ENCODE measurements at regions of chr17 and their contacts with region 1.

Region 1: DNA sequence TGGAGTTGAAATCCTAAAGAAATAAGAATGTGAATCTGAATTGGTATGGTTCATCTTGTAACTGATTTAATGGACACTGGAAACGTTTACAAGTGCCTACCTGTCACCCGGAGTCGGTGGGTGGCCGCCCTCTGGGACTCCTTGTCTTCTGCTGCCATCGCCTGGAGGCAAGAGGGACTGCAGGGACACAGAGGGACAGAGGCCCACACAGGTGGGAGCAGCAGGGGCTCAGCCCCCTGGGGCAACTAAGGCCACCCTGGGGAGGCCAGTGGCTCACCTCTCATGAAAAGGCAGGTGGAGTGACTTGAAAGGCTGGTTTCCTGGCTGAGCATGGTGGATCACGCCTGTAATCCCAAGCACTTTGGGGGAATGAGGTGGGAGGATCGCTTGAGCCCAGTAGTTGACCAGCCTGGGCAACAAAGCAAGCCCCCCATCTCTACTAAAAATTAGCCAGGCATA is 23.2 kb downstream of the TMEM92 start:
- DNase-seq: peak; percentile 59 to 86 (median 80)
- ATAC-seq: peak; percentile 100
- H3K4me3 ChIP-seq: no peak overlapping the region
- H3K4me3 Mint-ChIP-seq: no peak overlapping the region
- H3K27ac ChIP-seq: no peak overlapping the region
- H3K27ac Mint-ChIP-seq: no peak overlapping the region
- H3K4me1 ChIP-seq: no peaks in the 10 kb centered on the region
- H3K4me1 Mint-ChIP-seq: no peaks in the 10 kb centered on the region
- H3K27me3 ChIP-seq: no peaks in the 10 kb centered on the region
- H3K27me3 Mint-ChIP-seq: peaks cover 3% of the 10 kb centered on the region
- CTCF ChIP-seq: peak; percentile 87

Region 2: DNA sequence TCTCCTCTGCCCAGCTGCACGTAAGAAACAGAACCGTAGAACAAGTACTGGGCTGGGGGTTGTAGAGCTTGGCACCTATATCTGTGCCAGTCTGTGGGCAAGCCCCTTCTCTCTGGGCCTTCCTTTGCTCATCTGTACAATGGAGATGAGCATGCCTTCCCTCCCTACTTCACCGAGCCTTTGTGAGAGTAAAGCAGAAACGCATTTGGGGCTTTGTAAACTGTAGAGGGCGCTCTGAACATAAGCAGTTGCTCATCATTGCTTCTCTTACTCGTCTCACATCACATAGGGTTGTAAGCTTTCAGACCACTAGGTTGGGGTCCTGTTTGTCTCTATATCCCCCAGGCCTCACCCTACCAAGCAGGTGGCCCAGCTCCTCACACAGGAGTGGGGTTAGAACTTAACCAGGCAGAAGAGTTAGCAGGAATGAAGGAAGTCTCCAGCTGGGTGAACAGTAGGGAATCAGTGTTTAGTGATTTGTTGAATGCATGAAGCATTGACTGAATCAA is 182.5 kb before region 1 on chr17:
- CTCF ChIA-PET with region 1: no interaction called
- POLR2A ChIA-PET with region 1: no interaction called
- intact Hi-C with region 1: loop called in 1 of 2 experiments (anchors 5 kb)
- DNase-seq: peak in 5 of 9 experiments; percentile 30 to 69 (median 45)
- ATAC-seq: peak; percentile 56
- H3K4me3 ChIP-seq: no peak overlapping the region
- H3K4me3 Mint-ChIP-seq: no peak overlapping the region
- H3K27ac ChIP-seq: no peak overlapping the region
- H3K27ac Mint-ChIP-seq: no peak overlapping the region
- H3K4me1 ChIP-seq: peaks cover 14% of the 10 kb centered on the region
- H3K4me1 Mint-ChIP-seq: peaks cover 13% of the 10 kb centered on the region
- H3K27me3 ChIP-seq: peaks cover 11 to 17% of the 10 kb centered on the region in 2 experiments
- H3K27me3 Mint-ChIP-seq: peaks cover 36% of the 10 kb centered on the region
- CTCF ChIP-seq: peak; percentile 56

Region 3: DNA sequence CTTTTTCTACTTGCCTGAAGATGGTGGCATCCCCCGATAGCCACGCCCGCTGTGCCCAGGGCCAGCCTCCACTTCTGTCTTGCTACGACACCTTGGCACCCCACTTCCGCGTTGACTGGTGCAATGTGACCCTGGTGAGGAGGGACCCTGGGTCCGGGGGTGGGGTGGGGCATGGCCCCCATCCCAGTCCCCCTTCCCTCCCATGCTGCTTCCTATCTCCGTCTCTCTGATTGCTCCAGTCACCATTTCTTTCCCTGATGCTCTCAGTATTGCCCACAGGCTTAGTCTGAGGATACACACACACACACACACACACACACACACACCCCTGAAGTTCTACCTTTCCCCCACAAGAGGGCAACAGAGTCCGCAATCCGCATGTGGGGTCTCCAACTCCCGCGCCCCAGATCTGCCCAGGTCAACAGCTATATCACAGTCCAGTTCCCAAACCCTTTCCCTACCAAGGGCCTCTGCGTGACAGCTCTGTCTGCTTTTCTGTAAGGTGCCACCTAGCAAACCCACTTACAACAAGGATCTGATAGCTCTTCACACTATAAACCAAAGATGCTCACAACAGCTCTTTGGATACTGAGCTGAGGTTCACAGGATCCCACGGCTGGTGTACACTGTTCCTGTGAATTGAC is 128.2 kb before region 1 on chr17:
- CTCF ChIA-PET with region 1: interaction called, 10 read pairs
- POLR2A ChIA-PET with region 1: no interaction called
- intact Hi-C with region 1: loop called (anchors 1 kb)
- DNase-seq: peak; percentile 37 to 83 (median 70)
- ATAC-seq: peak; percentile 86
- H3K4me3 ChIP-seq: peak overlapping the region; percentile 28 to 32
- H3K4me3 Mint-ChIP-seq: peak overlapping the region; percentile 75
- H3K27ac ChIP-seq: peak overlapping the region; percentile 17 to 28
- H3K27ac Mint-ChIP-seq: peak overlapping the region; percentile 90
- H3K4me1 ChIP-seq: peaks cover 20% of the 10 kb centered on the region
- H3K4me1 Mint-ChIP-seq: peaks cover 10% of the 10 kb centered on the region
- H3K27me3 ChIP-seq: no peaks in the 10 kb centered on the region
- H3K27me3 Mint-ChIP-seq: peaks cover 3% of the 10 kb centered on the region
- CTCF ChIP-seq: peak; percentile 55

Region 4: DNA sequence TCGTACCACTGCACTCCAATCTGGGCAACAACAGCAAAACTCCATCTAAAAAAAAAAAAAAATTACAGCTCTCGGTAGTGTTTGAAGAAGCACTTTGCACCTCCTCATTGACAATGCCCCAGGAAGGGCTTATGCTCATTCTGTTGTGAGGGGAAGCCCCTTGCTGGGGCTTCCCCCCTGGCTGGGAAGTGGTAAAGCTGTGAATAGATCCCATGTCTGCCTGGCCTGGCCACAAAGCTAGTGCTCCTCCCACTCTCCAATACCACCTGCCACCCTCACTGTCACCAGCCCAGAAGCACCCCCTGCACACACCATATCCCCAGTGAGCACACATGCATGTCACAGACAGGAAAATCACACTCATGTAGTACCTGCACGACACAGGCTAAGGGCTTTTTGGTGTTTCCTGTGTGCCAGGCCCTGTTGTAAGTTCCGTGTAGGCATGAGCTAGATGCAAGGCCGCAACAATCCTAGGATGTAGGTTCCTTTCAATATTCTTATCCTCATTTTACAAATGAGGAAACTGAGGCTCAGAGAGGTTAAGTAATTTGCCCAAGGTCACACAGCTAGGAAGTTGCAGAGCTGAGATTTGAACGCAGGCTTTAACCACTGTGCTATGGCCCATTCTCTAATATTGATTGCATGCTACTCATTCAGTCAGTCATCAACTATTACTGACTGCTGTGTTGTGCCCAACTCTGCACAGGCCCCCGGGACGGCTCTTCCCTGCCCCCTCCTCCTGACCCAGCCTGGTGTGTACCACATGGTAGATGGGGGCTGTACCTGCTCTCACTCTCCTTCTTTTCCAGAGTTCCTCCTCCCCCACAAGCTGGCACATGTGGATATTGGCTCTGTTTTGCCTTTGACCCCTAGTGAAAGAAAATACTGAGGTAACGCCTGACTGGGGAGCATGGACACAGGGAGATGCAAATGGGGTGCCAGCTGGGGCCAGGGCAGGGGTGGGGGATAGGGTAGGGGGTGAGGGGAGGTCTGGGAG is 84.1 kb before region 1 on chr17:
- CTCF ChIA-PET with region 1: interaction called, 16 read pairs
- POLR2A ChIA-PET with region 1: interaction called, 4 read pairs
- intact Hi-C with region 1: no loop called
- DNase-seq: peak in 8 of 9 experiments; percentile 4 to 82 (median 50)
- ATAC-seq: peak; percentile 97
- H3K4me3 ChIP-seq: no peak overlapping the region
- H3K4me3 Mint-ChIP-seq: no peak overlapping the region
- H3K27ac ChIP-seq: no peak overlapping the region
- H3K27ac Mint-ChIP-seq: no peak overlapping the region
- H3K4me1 ChIP-seq: peaks cover 9% of the 10 kb centered on the region
- H3K4me1 Mint-ChIP-seq: peaks cover 7% of the 10 kb centered on the region
- H3K27me3 ChIP-seq: peaks cover 0 to 2% of the 10 kb centered on the region in 2 experiments
- H3K27me3 Mint-ChIP-seq: peaks cover 15% of the 10 kb centered on the region
- CTCF ChIP-seq: no peak

Region 5: DNA sequence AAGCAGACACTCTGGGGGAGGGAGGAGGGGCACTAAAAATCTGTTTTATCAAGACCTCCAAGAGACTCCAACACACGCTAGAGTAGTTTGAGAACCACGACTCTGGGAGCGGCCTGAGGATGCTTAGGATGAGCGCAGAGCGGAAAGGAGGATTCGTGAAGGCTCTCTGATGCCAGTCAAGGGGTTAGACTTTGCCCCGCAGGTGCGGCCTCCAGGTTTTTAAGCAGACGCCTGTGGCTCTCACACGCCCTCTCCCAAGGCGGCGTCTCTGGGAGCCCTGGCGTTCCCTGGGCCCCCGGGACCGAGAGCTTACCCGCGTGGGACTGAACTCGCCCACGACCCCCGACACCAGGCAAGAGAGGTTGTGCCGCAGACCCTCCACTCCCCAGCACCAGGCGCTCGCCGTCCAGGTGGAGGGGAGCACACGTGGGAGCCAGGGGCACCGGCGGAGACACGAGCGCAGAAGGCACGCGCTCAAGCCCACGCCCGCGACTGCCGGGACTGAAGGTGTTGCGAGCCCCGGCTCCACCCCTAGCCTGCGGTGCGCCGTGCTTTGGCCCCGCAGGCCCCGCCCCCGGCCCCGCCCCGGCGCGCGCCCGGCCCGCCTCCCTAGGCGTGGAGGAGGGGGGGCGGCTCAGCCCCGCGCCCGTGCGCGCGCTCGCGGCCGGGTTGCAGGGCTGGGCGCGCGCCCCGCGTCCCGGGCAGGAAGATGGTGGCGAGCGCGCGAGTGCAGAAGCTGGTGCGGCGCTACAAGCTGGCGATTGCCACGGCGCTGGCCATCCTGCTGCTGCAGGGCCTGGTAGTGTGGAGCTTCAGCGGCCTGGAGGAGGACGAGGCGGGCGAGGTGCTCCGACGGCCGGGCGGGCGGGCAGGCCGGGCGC is 48.2 kb after region 1 on chr17 and contains the start of gene XYLT2:
- CTCF ChIA-PET with region 1: no interaction called
- POLR2A ChIA-PET with region 1: no interaction called
- intact Hi-C with region 1: loop called in 1 of 2 experiments (anchors 1 kb)
- DNase-seq: peak; percentile 83 to 96 (median 93)
- ATAC-seq: peak; percentile 94
- H3K4me3 ChIP-seq: peak within 1 kb of the TSS; percentile 78 to 90
- H3K4me3 Mint-ChIP-seq: peak within 1 kb of the TSS; percentile 93
- H3K27ac ChIP-seq: peak within 1 kb of the TSS; percentile 56 to 77
- H3K27ac Mint-ChIP-seq: peak within 1 kb of the TSS; percentile 91
- H3K4me1 ChIP-seq: peaks cover 29% of the 10 kb centered on the region
- H3K4me1 Mint-ChIP-seq: peaks cover 37% of the 10 kb centered on the region
- H3K27me3 ChIP-seq: no peaks in the 10 kb centered on the region
- H3K27me3 Mint-ChIP-seq: no peaks in the 10 kb centered on the region
- CTCF ChIP-seq: no peak
- total RNA-seq, gene XYLT2: 9.0 to 9.4 TPM

Measured in CD8-positive, alpha-beta T cell (primary cell).